ENCODE measurements at regions of chr17 and their contacts with region 1.

Region 1: DNA sequence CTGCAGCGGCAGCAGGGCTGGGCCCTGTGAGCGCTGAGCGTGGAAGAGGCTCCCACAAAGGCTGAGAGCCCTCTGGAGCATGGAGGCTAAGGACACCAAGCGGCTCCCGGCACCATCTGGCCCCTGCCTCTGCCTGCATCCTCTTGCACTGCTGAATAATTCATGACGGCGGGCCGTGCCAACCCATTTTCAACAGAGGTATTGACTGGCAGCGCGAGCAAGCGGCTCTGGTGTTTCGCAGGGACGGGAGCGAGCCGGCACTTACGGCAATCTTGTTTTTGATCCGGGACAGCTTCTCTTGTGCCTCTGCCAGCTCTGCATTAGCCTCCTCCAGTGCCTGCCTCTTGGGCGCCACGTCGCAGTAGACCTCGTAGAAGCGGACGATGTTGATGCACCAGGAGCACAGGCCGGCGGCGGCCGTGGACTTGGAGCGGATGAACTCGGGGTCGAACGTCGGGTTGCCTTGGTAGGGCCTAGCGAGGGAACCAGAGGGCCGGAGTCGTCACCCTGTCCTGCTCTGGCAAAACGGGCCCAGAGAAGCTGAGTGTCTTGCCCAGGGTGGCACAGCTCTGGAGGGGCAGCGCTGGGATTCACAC is 80.4 kb downstream of the PGS1 start:
- DNase-seq: no peak
- H3K4me3 ChIP-seq: no peak overlapping the region
- CTCF ChIP-seq: no peak
- POLR2A ChIP-seq: no peak

Region 2: GRCh38 chr17:79255926-79256585 is 797.2 kb after region 1 on chr17:
- intact Hi-C with region 1: loop called (anchors 5 kb)
- DNase-seq: no peak
- H3K4me3 ChIP-seq: no peak overlapping the region
- CTCF ChIP-seq: no peak
- POLR2A ChIP-seq: no peak

Measured in lower leg skin (tissue), 4 donors.